Dorsolateral prefrontal cortex (tissue), 120 donors: ENCODE measurements at regions of chr11 and their contacts with region 1.

Region 1: DNA sequence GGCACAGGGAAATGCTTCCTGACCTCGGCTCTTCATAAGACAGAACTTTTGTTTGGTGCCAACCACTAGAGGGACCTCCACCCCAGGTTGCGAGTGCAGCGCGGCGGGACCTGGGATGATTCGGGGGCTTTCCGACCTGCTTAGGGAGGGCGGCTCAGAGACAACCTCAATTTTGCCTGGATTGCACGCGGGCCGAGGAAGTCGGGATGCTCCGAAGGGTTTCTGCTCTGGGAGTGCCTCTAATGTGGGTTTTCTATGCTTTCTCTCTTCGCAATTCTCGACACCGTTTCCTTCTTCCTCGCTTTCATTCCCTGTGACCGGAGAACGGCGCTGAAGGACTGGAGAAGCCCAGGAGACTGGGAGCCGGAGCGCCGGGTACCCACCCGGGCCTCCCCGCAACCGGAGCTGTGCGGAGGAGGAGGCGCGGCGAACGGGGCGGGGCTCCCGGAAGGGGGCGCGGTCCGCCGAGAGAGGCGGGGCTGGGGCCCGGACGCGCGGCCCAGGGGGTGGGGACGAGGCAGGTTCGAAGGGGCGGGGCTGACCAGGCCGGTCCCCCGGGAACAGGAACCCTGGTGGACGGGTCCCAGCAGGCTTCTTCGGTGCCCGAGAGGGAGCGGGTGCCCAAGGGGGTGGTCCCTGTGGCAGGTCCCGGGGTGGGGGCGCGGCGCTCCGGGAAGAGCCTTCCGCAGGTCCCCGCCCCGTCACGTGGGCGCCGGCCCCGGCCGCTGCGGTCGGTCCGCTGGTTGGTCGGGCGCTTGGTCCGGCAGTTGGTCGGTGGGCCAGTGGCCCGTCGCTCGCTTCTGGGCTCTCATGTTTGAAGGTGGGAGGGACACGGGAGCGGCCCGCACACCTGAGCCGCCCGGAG is at the start of gene PPFIBP2:
- DNase-seq: peak; percentile 66 to 88 (median 78)
- H3K4me3 ChIP-seq: peak within 1 kb of the TSS; percentile 60 to 98 (median 87)
- H3K27ac ChIP-seq: peak within 1 kb of the TSS; percentile 82 to 99 (median 96)
- H3K27me3 ChIP-seq: no peaks in the 10 kb centered on the region
- CTCF ChIP-seq: peak in 55 of 56 donors; percentile 43 to 79 (median 67)
- total RNA-seq, gene PPFIBP2: 14.4 to 115 (median 35.6) TPM

Region 2: DNA sequence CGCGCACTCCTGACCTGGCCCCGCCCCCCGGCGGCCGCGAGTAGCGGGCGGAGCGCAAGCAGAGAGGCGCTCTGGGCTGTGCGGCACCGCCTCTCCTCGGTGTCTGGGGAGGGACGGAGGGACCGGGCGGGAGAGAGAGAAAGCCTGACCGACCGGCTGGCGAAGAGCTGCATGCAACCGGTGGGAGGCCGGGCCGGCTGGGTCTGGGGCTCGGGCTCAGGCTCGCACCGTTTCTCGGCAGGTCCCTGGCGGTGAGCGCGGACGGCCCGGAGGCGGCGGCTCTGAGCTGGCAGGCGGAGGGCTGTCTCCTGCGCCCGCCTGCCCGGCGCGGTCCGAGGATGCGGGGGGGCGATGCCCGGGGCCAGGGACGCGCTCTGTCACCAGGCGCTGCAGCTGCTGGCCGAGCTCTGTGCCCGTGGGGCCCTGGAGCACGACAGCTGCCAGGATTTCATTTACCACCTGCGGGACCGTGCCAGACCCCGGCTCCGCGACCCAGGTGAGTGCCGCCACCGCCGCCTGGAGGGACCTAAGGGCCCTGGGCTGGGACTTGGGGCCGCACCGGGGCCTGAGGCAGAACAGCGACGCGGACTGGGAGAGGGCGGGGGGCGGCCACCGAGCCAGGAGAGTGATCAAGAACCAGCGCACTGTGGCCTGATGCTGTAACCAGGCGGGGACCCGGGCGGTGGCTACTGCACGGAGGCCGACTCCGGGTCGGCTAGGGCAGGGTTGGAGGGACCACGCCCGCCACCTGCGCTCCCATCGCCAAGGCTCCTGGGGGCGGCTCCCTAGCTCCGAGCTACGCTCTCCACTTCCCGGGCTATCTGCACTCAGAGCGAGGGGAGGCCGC is 261.4 kb before region 1 on chr11 and contains the start of gene SYT9:
- intact Hi-C with region 1: loop called (anchors 10 kb)
- DNase-seq: peak; percentile 38 to 83 (median 72)
- H3K4me3 ChIP-seq: peak within 1 kb of the TSS; percentile 54 to 97 (median 82)
- H3K27ac ChIP-seq: peak within 1 kb of the TSS in 53 of 59 donors; percentile 19 to 86 (median 66)
- H3K27me3 ChIP-seq: peaks cover 0 to 17% (median 0%) of the 10 kb centered on the region in 45 donors
- CTCF ChIP-seq: peak in 45 of 56 donors; percentile 4 to 66 (median 33)
- total RNA-seq, gene SYT9: 8.3 to 25.6 (median 12.9) TPM

Region 3: DNA sequence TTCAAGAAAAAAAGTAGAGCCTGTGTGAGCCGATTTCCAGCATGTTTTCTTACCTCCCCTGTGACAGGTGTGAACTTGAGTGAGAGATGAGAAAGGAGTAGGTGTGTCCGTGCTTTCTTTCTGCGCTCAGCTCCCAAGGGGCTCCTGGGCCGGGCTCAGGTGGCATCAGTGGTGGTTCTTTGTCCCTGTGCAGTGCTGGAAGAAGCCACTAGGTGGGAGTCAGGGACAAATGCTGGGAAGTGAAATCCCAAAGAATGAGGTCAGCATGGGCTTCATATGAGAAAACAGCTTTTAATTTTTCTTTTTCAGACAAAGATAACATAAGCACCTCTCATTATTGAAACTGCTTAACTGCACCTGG is 58.2 kb after region 1 on chr11:
- intact Hi-C with region 1: loop called (anchors 1 to 2 kb)
- DNase-seq: peak; percentile 49 to 79 (median 70)
- H3K4me3 ChIP-seq: no peak overlapping the region
- H3K27ac ChIP-seq: peak overlapping the region; percentile 26 to 99 (median 81)
- H3K27me3 ChIP-seq: no peaks in the 10 kb centered on the region
- CTCF ChIP-seq: peak; percentile 81 to 99 (median 95)

Region 4: GRCh38 chr11:7577291-7578190 is 64.1 kb after region 1 on chr11:
- intact Hi-C with region 1: loop called (anchors 1 to 2 kb)
- DNase-seq: peak; percentile 10 to 89 (median 78)
- H3K4me3 ChIP-seq: peak overlapping the region; percentile 11 to 71 (median 48)
- H3K27ac ChIP-seq: peak overlapping the region; percentile 80 to 99 (median 97)
- H3K27me3 ChIP-seq: no peaks in the 10 kb centered on the region
- CTCF ChIP-seq: peak in 27 of 56 donors; percentile 1 to 58 (median 25)

Region 5: GRCh38 chr11:7657306-7658025 is 144.0 kb after region 1 on chr11:
- intact Hi-C with region 1: loop called (anchors 2 kb)
- DNase-seq: peak in 9 of 10 donors; percentile 23 to 78 (median 71)
- H3K4me3 ChIP-seq: no peak overlapping the region
- H3K27ac ChIP-seq: peak overlapping the region in 56 of 59 donors; percentile 28 to 98 (median 82)
- H3K27me3 ChIP-seq: no peaks in the 10 kb centered on the region
- CTCF ChIP-seq: peak in 55 of 56 donors; percentile 50 to 90 (median 73)

Region 6: DNA sequence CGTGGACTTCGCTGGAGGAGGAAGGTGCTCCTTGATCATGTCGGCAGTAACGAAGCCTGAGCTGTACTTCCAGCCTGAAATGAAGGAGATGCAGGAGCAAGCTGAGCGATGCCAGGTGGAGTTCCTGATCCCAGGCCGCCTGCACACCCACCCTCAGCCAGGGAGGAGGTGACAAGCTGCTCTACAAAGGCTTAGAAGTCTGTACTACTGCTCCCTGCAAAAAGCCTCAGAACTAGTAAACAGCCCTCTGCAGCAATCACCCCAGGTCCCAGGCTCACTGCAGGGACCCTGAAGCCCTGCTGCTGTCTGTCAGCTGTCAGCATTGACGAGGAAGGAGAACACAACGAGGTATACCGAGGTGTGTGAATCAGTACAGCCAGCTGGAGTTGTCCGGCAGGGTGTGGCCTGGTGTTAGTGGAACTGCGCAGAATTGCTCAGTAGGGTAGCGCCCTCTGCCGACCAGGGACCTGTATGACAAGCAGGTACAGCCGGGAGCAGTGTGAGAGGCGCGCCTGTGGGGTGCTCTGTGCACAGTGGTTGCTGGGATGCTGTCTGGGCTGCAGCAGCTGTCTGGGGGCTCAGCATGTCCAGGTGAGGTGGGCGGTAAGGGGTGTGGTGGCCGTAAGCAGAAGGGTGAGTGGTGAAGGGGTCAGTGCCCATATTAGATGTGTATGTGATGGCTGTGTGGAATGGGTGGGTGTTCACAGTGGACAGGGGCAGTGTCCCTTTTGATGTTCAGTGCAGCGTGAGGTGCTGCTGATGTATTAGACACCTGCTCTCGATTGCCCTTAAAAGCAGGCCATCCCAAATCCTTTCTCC is 152.2 kb after region 1 on chr11:
- intact Hi-C with region 1: loop called in 1 of 2 experiments (anchors 2 kb)
- DNase-seq: peak in 9 of 10 donors; percentile 58 to 78 (median 68)
- H3K4me3 ChIP-seq: no peak overlapping the region
- H3K27ac ChIP-seq: peak overlapping the region in 49 of 59 donors; percentile 6 to 99 (median 94)
- H3K27me3 ChIP-seq: no peaks in the 10 kb centered on the region
- CTCF ChIP-seq: peak in 55 of 56 donors; percentile 26 to 93 (median 78)